ENCODE measurements at regions of chr4 and their contacts with region 1.

Region 1: GRCh38 chr4:158172261-158173258 is at the start of gene GASK1B:
- DNase-seq: peak in 3 of 6 donors; percentile 15 to 73 (median 18)
- ATAC-seq: peak; percentile 64 to 79 (median 70)
- H3K4me3 ChIP-seq: peak within 1 kb of the TSS; percentile 16 to 50 (median 26)
- H3K27ac ChIP-seq: peak within 1 kb of the TSS in 3 of 4 donors; percentile 25 to 83 (median 74)
- H3K4me1 ChIP-seq: peaks cover 10 to 21% (median 11%) of the 10 kb centered on the region in 3 donors
- H3K27me3 ChIP-seq: no peaks in the 10 kb centered on the region
- CTCF ChIP-seq: peak in 3 of 4 donors; percentile 28 to 43 (median 29)
- total RNA-seq, gene GASK1B: 1.4 to 27.7 (median 7.7) TPM

Region 2: GRCh38 chr4:157964463-157964862 is 208.1 kb before region 1 on chr4:
- intact Hi-C with region 1: no loop called
- DNase-seq: no peak
- ATAC-seq: no peak
- H3K4me3 ChIP-seq: no peak overlapping the region
- H3K27ac ChIP-seq: no peak overlapping the region
- H3K4me1 ChIP-seq: no peaks in the 10 kb centered on the region
- H3K27me3 ChIP-seq: no peaks in the 10 kb centered on the region
- CTCF ChIP-seq: no peak

Region 3: GRCh38 chr4:157992038-157992705 is 180.4 kb before region 1 on chr4:
- intact Hi-C with region 1: loop called in 2 of 3 experiments (anchors 5 kb)
- DNase-seq: peak in 3 of 6 donors; percentile 32 to 68 (median 33)
- ATAC-seq: peak; percentile 73 to 91 (median 84)
- H3K4me3 ChIP-seq: peak overlapping the region in 2 of 4 donors; percentile 18 to 35
- H3K27ac ChIP-seq: peak overlapping the region in 3 of 4 donors; percentile 6 to 78 (median 61)
- H3K4me1 ChIP-seq: peaks cover 5 to 37% (median 29%) of the 10 kb centered on the region in 3 donors
- H3K27me3 ChIP-seq: no peaks in the 10 kb centered on the region
- CTCF ChIP-seq: peak; percentile 18 to 59 (median 42)

Measured in pancreas (tissue), 10 donors.